Calu3 (cell line): ENCODE measurements at regions of chr11 and their contacts with region 1.

Region 1: GRCh38 chr11:47259178-47259977 is 1.6 kb downstream of the NR1H3 start:
- DNase-seq: peak; percentile 51
- H3K4me3 Mint-ChIP-seq: peak overlapping the region; percentile 28
- H3K27ac Mint-ChIP-seq: peak overlapping the region; percentile 53
- H3K4me1 Mint-ChIP-seq: peaks cover 41% of the 10 kb centered on the region
- H3K27me3 Mint-ChIP-seq: no peaks in the 10 kb centered on the region
- CTCF ChIP-seq: peak; percentile 53

Region 2: GRCh38 chr11:47176328-47177228 is 82.8 kb before region 1 on chr11 and contains the start of gene ARFGAP2:
- CTCF ChIA-PET with region 1: interaction called, 22 read pairs
- intact Hi-C with region 1: loop called (anchors 2 kb)
- DNase-seq: peak; percentile 99
- H3K4me3 Mint-ChIP-seq: peak within 1 kb of the TSS; percentile 98
- H3K27ac Mint-ChIP-seq: peak within 1 kb of the TSS; percentile 99
- H3K4me1 Mint-ChIP-seq: peaks cover 23% of the 10 kb centered on the region
- H3K27me3 Mint-ChIP-seq: no peaks in the 10 kb centered on the region
- CTCF ChIP-seq: no peak
- total RNA-seq, gene ARFGAP2: 108 and 121 TPM in 2 replicates

Region 3: GRCh38 chr11:47186076-47186936 is 73.1 kb before region 1 on chr11 and contains the start of gene PACSIN3:
- CTCF ChIA-PET with region 1: interaction called, 9 read pairs
- intact Hi-C with region 1: loop called (anchors 2 kb)
- DNase-seq: peak; percentile 71
- H3K4me3 Mint-ChIP-seq: peak within 1 kb of the TSS; percentile 81
- H3K27ac Mint-ChIP-seq: no peak within 1 kb of the TSS
- H3K4me1 Mint-ChIP-seq: peaks cover 9% of the 10 kb centered on the region
- H3K27me3 Mint-ChIP-seq: no peaks in the 10 kb centered on the region
- CTCF ChIP-seq: no peak
- total RNA-seq, gene PACSIN3: 22.1 and 26.5 TPM in 2 replicates

Region 4: GRCh38 chr11:47213985-47214564 is 45.3 kb before region 1 on chr11:
- CTCF ChIA-PET with region 1: interaction called, 7 read pairs
- intact Hi-C with region 1: loop called (anchors 5 kb)
- DNase-seq: peak; percentile 89
- H3K4me3 Mint-ChIP-seq: peak overlapping the region; percentile 71
- H3K27ac Mint-ChIP-seq: peak overlapping the region; percentile 80
- H3K4me1 Mint-ChIP-seq: peaks cover 34% of the 10 kb centered on the region
- H3K27me3 Mint-ChIP-seq: no peaks in the 10 kb centered on the region
- CTCF ChIP-seq: no peak

Region 5: DNA sequence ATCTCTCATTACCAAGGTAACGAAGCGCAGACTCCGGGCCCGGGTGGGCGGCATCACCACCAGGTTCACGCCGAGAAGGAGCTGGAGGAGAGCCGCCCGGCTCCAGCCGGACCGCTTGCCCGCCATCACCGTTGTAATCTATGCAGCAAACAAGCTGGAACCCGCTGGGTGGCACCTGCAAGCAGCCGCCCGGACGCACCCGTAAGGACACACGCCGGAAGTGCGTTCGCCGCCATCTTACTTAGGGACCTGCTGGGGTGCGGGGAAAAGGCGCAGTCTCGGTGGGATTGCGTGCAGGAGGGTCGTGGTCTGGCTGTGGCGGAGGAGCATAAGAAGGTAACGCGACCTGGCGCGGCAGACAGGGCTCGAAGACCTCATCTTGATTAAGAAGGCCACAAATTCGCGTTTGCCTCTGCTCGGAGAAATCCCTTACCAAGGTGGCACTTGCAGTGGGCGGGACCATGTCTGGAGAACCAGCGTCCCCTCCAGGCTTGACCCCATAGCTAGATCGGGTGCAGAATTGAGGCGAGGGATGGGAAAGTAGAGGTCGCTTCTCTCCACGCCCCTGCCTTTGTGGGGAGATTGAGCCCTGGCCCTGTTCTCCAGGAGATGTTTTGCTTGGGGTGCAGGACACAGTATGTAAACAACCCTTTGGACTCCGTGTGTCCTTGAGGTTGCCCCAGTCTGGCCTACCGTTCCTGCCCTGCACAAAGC is 10.6 kb before region 1 on chr11 and contains the start of gene ACP2:
- CTCF ChIA-PET with region 1: interaction called, 10 read pairs
- intact Hi-C with region 1: no loop called
- DNase-seq: peak; percentile 88
- H3K4me3 Mint-ChIP-seq: peak within 1 kb of the TSS; percentile 98
- H3K27ac Mint-ChIP-seq: peak within 1 kb of the TSS; percentile 98
- H3K4me1 Mint-ChIP-seq: no peaks in the 10 kb centered on the region
- H3K27me3 Mint-ChIP-seq: no peaks in the 10 kb centered on the region
- CTCF ChIP-seq: no peak
- total RNA-seq, gene ACP2: 23.5 and 30.6 TPM in 2 replicates

Region 6: DNA sequence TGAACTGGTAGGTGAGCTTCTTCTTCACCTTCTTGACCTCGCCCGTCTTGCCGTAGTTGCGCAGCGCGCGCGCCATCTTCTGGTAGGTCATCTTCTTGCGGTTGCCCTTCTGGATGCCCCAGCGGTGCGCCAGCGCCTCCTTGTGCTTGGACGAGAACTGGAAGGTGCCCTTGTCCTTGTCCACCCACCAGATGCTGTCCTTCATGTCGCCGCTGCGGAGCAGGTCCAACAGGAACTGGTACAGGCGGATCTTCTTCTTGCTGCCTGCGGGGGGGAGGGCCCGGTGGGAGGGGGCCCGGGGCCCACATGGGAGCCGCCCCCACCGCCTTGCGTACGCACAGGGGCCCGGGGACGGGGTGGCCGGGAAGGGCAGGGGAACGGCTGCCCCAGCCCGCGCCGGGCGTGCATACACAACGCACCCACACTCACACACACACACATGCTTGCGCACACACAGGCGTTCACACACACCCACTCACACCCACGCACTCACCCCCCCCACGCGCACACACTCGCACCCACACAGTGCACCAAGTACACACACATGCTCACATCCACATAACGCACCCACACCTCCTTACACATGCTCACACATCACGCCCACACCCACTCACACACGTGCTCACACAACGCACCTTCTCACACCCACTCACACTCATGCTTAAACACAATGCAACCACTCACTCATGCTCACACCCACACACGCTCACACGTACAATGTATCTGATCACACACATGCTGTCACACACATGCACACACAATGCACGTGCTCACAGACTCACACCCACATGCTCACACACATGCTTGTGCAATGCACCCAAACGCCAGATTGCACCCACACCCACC is 96.1 kb after region 1 on chr11:
- CTCF ChIA-PET with region 1: interaction called, 10 read pairs
- intact Hi-C with region 1: loop called (anchors 10 kb)
- DNase-seq: peak; percentile 96
- H3K4me3 Mint-ChIP-seq: no peak overlapping the region
- H3K27ac Mint-ChIP-seq: no peak overlapping the region
- H3K4me1 Mint-ChIP-seq: no peaks in the 10 kb centered on the region
- H3K27me3 Mint-ChIP-seq: no peaks in the 10 kb centered on the region
- CTCF ChIP-seq: peak; percentile 97